ENCODE measurements at regions of chr20 and their contacts with region 1.

Region 1: DNA sequence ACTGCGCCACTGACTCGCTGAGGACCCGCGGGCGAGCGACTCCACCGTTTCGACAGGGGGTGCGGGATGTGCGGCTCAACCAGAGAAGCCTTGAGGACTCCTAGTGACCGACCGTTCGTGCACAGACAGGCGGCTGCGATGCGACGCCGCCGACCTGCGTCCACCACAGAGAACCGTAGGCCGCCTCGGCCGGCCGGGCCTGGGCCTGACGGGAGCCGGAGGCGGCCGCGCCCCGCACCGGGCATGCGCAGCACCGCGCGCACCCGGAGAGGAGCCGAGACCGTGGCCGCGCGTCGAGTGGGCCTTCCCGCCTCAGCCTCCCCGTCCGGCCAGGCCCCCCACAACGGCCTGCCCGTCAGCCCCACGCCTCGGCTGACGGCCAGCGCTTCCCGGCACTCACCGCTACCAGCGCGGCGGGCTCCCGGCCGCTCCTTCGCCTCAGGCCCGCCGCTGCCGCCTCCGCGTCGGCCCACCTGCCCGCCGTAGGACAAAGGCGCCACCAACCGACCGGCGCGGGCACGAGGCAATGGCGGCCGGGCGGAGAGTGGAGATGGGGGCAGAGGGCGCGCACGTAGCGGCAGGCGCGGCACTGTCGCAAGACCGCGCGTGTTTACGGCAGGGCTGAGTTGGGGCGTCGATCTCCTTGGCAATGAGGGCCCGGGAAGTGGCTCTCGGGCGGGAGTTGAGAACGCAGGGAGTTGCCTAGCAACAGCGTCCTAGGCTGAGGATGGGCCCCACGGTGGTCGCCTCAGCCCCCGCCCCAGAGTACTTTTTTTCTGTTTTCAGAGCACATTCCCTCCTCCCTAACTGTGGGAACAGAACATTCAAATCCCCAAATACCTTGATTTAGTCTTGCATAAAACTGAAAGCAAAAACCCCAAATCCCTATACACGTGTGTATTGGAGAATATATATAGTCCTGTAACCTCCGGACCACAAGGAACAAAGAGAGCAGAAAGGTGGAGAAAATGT is at the start of gene NCOA5:
- DNase-seq: peak; percentile 94
- H3K4me3 ChIP-seq: peak within 1 kb of the TSS; percentile 91 to 94 (median 91)
- H3K27ac ChIP-seq: peak within 1 kb of the TSS; percentile 87
- H3K4me1 ChIP-seq: peaks cover 20% of the 10 kb centered on the region
- H3K27me3 ChIP-seq: no peaks in the 10 kb centered on the region
- CTCF ChIP-seq: peak; percentile 9 to 48
- total RNA-seq, gene NCOA5: 11.2 to 17.8 TPM

Region 2: DNA sequence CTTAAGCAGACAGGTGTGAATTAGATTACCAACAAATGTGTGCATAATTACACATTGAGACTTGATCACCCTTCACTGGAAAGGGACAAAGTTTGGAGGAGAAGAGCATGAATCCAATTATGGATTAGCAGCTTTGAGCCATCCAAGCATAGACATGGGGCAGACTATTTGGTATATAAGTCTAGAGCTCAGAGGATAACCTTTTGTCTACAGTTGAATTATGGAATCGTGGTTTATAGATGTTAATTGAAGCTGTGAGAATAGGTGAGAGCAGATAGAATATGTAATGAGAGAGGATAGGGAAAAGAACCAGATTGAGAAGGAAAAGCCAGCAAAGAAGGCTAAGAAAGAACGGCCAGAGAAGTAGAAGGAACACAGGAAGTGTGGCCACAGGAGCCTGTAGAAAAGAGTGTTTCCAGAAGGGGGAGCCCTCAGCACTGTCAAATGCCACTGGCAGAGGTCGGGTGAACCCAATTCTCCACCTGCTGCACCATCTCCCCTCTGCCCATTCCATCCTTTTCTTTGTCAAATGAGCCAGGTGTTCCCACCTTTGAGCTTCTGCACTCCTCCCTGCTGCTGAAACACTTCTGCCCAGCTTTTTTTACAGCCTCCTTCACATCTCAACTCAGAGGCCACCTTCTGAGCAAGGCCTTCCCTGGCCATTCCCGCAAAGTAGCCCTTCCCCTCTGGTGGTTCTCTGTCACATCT is 290.6 kb before region 1 on chr20:
- CTCF ChIA-PET with region 1: no interaction called
- dilution Hi-C with region 1: no loop called
- in situ Hi-C with region 1: loop called in 1 of 2 experiments (anchors 25 kb)
- intact Hi-C with region 1: loop called (anchors 10 kb)
- DNase-seq: peak; percentile 37
- H3K4me3 ChIP-seq: no peak overlapping the region
- H3K27ac ChIP-seq: no peak overlapping the region
- H3K4me1 ChIP-seq: no peaks in the 10 kb centered on the region
- H3K27me3 ChIP-seq: no peaks in the 10 kb centered on the region
- CTCF ChIP-seq: peak; percentile 76

Region 3: GRCh38 chr20:45993197-45993951 is 96.3 kb before region 1 on chr20:
- CTCF ChIA-PET with region 1: no interaction called
- dilution Hi-C with region 1: no loop called
- in situ Hi-C with region 1: no loop called
- intact Hi-C with region 1: loop called (anchors 2 kb)
- DNase-seq: peak; percentile 99
- H3K4me3 ChIP-seq: no peak overlapping the region
- H3K27ac ChIP-seq: peak overlapping the region; percentile 58
- H3K4me1 ChIP-seq: peaks cover 17% of the 10 kb centered on the region
- H3K27me3 ChIP-seq: no peaks in the 10 kb centered on the region
- CTCF ChIP-seq: no peak

Region 4: GRCh38 chr20:46013826-46014516 is 75.7 kb before region 1 on chr20:
- CTCF ChIA-PET with region 1: no interaction called
- dilution Hi-C with region 1: no loop called
- in situ Hi-C with region 1: no loop called
- intact Hi-C with region 1: loop called (anchors 2 kb)
- DNase-seq: peak; percentile 51
- H3K4me3 ChIP-seq: peak overlapping the region in 2 of 3 experiments; percentile 9 to 13
- H3K27ac ChIP-seq: no peak overlapping the region
- H3K4me1 ChIP-seq: peaks cover 9% of the 10 kb centered on the region
- H3K27me3 ChIP-seq: peaks cover 3% of the 10 kb centered on the region
- CTCF ChIP-seq: peak; percentile 35 to 66

Region 5: GRCh38 chr20:46022411-46023147 is 67.1 kb before region 1 on chr20:
- CTCF ChIA-PET with region 1: interaction called, 6 read pairs
- dilution Hi-C with region 1: no loop called
- in situ Hi-C with region 1: no loop called
- intact Hi-C with region 1: loop called (anchors 2 kb)
- DNase-seq: peak; percentile 23
- H3K4me3 ChIP-seq: peak overlapping the region; percentile 8 to 59 (median 29)
- H3K27ac ChIP-seq: no peak overlapping the region
- H3K4me1 ChIP-seq: peaks cover 8% of the 10 kb centered on the region
- H3K27me3 ChIP-seq: no peaks in the 10 kb centered on the region
- CTCF ChIP-seq: peak; percentile 57 to 78